Endothelial cell of umbilical vein (primary cell): ENCODE measurements at regions of chr14 and their contacts with region 1.

Region 1: GRCh38 chr14:89040460-89041259 is 216.2 kb downstream of the TTC8 start:
- DNase-seq: peak; percentile 88
- H3K4me3 ChIP-seq: peak overlapping the region in 2 of 3 experiments; percentile 34 to 49
- H3K27ac ChIP-seq: peak overlapping the region; percentile 83
- H3K4me1 ChIP-seq: peaks cover 9% of the 10 kb centered on the region
- H3K27me3 ChIP-seq: peaks cover 0 to 9% of the 10 kb centered on the region in 2 experiments
- CTCF ChIP-seq: peak; percentile 96 to 99
- POLR2A ChIP-seq: no peak

Region 2: DNA sequence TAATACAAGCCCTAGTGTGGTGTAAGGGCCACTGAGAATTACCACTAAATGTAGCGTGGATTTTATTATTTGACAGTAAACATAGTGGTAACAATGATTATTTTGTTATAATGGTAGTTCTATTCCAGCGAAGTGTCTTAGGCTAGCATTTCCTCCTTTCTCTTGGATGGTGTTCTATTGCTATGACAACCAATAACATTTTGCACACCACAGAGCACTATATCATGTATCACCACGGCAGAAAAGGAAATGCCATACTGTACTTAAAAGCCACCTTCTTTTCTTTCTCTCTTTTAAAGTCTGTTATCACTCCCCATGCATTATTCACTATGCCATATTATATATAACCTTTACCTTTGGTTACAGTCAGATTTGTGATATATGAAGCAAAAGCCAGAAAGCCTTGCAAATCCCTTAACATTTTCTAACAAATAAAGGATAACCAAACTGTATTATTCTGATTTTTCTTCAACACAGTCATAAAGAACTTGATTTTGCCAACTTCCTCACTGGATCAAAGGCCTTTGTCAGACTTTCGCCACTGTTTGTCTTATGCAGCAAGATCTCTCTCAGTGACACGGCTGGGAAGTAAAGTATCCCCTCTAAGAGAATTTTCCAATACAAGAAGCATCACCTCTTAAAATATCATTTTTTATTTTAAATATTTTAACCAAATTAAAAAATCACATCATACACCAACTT is 180.6 kb after region 1 on chr14:
- CTCF ChIA-PET with region 1: no interaction called
- POLR2A ChIA-PET with region 1: no interaction called
- dilution Hi-C with region 1: no loop called
- intact Hi-C with region 1: loop called (anchors 10 kb)
- DNase-seq: peak; percentile 86
- H3K4me3 ChIP-seq: no peak overlapping the region
- H3K27ac ChIP-seq: peak overlapping the region; percentile 70
- H3K4me1 ChIP-seq: peaks cover 4% of the 10 kb centered on the region
- H3K27me3 ChIP-seq: no peaks in the 10 kb centered on the region
- CTCF ChIP-seq: no peak
- POLR2A ChIP-seq: no peak

Region 3: GRCh38 chr14:89618811-89619551 is 578.3 kb after region 1 on chr14:
- CTCF ChIA-PET with region 1: no interaction called
- POLR2A ChIA-PET with region 1: no interaction called
- dilution Hi-C with region 1: no loop called
- intact Hi-C with region 1: loop called (anchors 1 kb)
- DNase-seq: peak; percentile 61
- H3K4me3 ChIP-seq: peak overlapping the region; percentile 91 to 97 (median 94)
- H3K27ac ChIP-seq: peak overlapping the region; percentile 77
- H3K4me1 ChIP-seq: peaks cover 28% of the 10 kb centered on the region
- H3K27me3 ChIP-seq: no peaks in the 10 kb centered on the region
- CTCF ChIP-seq: no peak
- POLR2A ChIP-seq: peak; percentile 65

Region 4: DNA sequence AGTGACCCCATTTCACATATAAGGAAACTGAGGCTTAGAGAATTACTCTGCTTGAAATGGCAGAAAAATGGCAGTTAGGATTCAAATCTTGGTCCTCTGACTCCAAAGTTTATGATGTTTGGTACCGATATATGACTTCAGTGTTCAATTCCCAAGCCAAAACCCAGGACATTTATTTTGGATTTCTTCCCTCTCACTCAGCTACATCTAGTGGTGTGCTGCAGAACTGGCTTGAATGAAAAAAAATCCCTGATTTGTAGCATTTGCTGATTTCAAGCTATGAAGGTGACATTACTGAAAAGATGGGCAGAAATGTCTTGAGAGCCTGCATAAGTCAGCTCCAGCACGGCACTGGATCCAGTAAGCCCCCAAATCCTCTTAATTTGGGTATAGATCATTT is 807.5 kb after region 1 on chr14:
- CTCF ChIA-PET with region 1: interaction called, 11 read pairs
- POLR2A ChIA-PET with region 1: no interaction called
- dilution Hi-C with region 1: no loop called
- intact Hi-C with region 1: no loop called
- DNase-seq: no peak
- H3K4me3 ChIP-seq: no peak overlapping the region
- H3K27ac ChIP-seq: no peak overlapping the region
- H3K4me1 ChIP-seq: no peaks in the 10 kb centered on the region
- H3K27me3 ChIP-seq: no peaks in the 10 kb centered on the region
- CTCF ChIP-seq: no peak
- POLR2A ChIP-seq: no peak

Region 5: DNA sequence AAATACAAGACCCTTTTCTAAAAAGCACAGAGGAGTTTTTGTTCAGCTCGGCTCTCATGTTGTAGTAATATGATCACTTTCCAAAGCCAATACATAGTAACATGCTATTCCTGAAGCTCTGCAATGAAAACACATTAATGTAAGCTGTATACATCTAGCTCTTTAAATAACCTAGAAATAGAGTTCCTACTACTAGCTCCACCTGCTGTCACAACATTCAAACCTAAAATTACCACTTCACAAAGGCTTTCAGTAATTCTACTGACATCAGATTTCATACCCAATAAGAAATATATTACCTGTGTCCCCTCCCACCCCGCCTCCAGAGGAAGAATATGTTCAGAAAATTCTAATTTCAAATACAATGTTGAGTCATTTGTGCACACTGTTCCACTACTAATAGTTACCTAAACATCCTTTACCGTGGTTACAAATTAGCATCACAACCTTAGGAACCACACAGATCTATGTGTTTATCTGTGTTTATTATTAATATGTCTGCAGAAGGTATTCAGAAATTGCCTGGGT is 896.1 kb after region 1 on chr14:
- CTCF ChIA-PET with region 1: interaction called, 49 read pairs
- POLR2A ChIA-PET with region 1: no interaction called
- dilution Hi-C with region 1: no loop called
- intact Hi-C with region 1: loop called (anchors 1 kb)
- DNase-seq: no peak
- H3K4me3 ChIP-seq: no peak overlapping the region
- H3K27ac ChIP-seq: no peak overlapping the region
- H3K4me1 ChIP-seq: peaks cover under 1% of the 10 kb centered on the region
- H3K27me3 ChIP-seq: no peaks in the 10 kb centered on the region
- CTCF ChIP-seq: no peak
- POLR2A ChIP-seq: no peak

Region 6: DNA sequence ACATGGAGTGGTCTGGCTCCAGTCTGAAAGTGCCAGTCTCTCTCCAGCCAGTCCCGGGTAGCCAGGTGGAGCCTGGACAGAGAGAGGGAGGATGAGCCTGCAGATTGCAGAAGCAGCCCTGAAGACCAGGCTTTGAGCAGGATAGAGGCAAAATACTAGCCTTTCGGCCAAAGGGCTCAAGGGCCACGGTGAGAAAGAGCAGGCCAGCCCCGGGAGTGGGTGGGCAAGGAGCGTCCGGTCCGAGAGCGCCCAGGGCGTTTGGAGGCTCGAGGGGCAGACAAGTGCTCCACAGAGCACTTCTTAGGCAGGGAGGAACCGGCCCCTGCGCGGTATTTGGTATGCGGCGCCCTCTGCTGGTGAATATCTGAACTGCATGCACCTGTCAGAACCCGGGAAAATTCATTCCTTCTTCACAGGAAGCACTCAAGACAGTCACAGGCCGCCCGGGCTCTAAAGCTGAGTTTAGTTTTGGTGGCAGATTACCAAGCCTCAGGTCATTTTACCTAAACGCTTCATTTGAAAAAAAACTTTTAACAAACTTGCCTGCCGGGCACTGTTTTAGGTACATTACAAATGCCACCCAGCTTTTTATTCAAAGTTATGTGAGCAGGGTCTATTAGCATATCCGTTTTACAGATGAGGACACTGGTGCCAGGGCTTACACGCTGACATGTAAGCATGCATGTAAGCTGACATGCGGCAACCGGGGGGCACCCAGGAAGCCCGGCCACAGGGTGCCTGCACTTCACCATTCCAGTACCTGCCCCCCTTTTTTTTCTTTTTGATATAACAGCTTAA is 1194.7 kb after region 1 on chr14:
- CTCF ChIA-PET with region 1: interaction called, 3 read pairs
- POLR2A ChIA-PET with region 1: no interaction called
- dilution Hi-C with region 1: no loop called
- intact Hi-C with region 1: loop called (anchors 5 kb)
- DNase-seq: peak; percentile 80
- H3K4me3 ChIP-seq: no peak overlapping the region
- H3K27ac ChIP-seq: no peak overlapping the region
- H3K4me1 ChIP-seq: no peaks in the 10 kb centered on the region
- H3K27me3 ChIP-seq: peaks cover 3 to 4% of the 10 kb centered on the region in 2 experiments
- CTCF ChIP-seq: peak; percentile 84 to 89
- POLR2A ChIP-seq: no peak